Activated B cell treated with CpG ODN at 0.5 μM for 24 hours (primary cell): ENCODE measurements at regions of chr2 and their contacts with region 1.

Region 1: DNA sequence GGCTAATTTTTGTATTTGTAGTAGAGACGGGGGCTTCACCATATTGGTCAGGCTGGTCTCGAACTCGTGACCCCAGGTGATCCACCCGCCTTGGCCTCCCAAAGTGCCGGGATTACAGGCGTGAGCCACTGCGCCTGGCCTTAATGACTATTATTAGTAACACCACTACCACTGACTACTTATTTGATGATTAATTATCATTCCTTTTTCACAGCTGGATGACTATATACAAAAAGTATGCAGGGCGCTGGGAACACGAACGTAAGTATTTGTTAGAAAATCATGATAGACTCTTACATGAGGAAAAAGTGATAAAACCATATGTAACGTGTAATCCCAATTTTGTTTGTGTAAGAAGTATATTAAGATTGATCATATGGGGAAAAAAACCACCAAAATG is 21.6 kb downstream of the DARS1 start:
- DNase-seq: no peak
- ATAC-seq: no peak
- H3K4me3 Mint-ChIP-seq: no peak overlapping the region
- H3K27ac Mint-ChIP-seq: no peak overlapping the region
- H3K4me1 Mint-ChIP-seq: peaks cover 45% of the 10 kb centered on the region
- H3K27me3 Mint-ChIP-seq: no peaks in the 10 kb centered on the region
- CTCF ChIP-seq: no peak

Region 2: GRCh38 chr2:135948642-135949355 is 15.0 kb before region 1 on chr2:
- CTCF ChIA-PET with region 1: no interaction called
- POLR2A ChIA-PET with region 1: no interaction called
- intact Hi-C with region 1: loop called (anchors 2 kb)
- DNase-seq: no peak
- ATAC-seq: peak; percentile 54
- H3K4me3 Mint-ChIP-seq: no peak overlapping the region
- H3K27ac Mint-ChIP-seq: peak overlapping the region; percentile 75
- H3K4me1 Mint-ChIP-seq: peaks cover 50% of the 10 kb centered on the region
- H3K27me3 Mint-ChIP-seq: no peaks in the 10 kb centered on the region
- CTCF ChIP-seq: no peak

Region 3: GRCh38 chr2:136297994-136298393 is 334.2 kb after region 1 on chr2:
- CTCF ChIA-PET with region 1: no interaction called
- POLR2A ChIA-PET with region 1: no interaction called
- intact Hi-C with region 1: no loop called
- DNase-seq: no peak
- ATAC-seq: no peak
- H3K4me3 Mint-ChIP-seq: no peak overlapping the region
- H3K27ac Mint-ChIP-seq: no peak overlapping the region
- H3K4me1 Mint-ChIP-seq: no peaks in the 10 kb centered on the region
- H3K27me3 Mint-ChIP-seq: no peaks in the 10 kb centered on the region
- CTCF ChIP-seq: no peak